Sciatic nerve (tissue), 2 donors: ENCODE measurements at regions of chr5 and their contacts with region 1.

Region 1: GRCh38 chr5:172496671-172497371 is 42.5 kb upstream of the SH3PXD2B start:
- DNase-seq: peak; percentile 56
- ATAC-seq: peak; percentile 57

Region 2: GRCh38 chr5:170740551-170741205 is 1756.1 kb before region 1 on chr5:
- intact Hi-C with region 1: loop called (anchors 5 kb)
- DNase-seq: no peak
- ATAC-seq: no peak